AG04450 (cell line): ENCODE measurements at regions of chr19 and their contacts with region 1.

Region 1: GRCh38 chr19:50556282-50557008 is 11.8 kb downstream of the LRRC4B start:
- DNase-seq: peak; percentile 16
- H3K4me3 ChIP-seq: peak overlapping the region; percentile 58
- H3K27ac ChIP-seq: no peak overlapping the region
- H3K27me3 ChIP-seq: peaks cover 15% of the 10 kb centered on the region
- CTCF ChIP-seq: peak; percentile 76

Region 2: GRCh38 chr19:50511068-50511822 is 45.2 kb before region 1 on chr19 and contains the start of gene JOSD2:
- CTCF ChIA-PET with region 1: interaction called, 12 read pairs
- POLR2A ChIA-PET with region 1: interaction called, 7 read pairs
- DNase-seq: peak; percentile 98
- H3K4me3 ChIP-seq: peak within 1 kb of the TSS; percentile 94
- H3K27ac ChIP-seq: peak within 1 kb of the TSS; percentile 80
- H3K27me3 ChIP-seq: no peaks in the 10 kb centered on the region
- CTCF ChIP-seq: no peak
- polyA plus RNA-seq, gene JOSD2: 19.6 and 30.7 TPM in 2 replicates

Region 3: DNA sequence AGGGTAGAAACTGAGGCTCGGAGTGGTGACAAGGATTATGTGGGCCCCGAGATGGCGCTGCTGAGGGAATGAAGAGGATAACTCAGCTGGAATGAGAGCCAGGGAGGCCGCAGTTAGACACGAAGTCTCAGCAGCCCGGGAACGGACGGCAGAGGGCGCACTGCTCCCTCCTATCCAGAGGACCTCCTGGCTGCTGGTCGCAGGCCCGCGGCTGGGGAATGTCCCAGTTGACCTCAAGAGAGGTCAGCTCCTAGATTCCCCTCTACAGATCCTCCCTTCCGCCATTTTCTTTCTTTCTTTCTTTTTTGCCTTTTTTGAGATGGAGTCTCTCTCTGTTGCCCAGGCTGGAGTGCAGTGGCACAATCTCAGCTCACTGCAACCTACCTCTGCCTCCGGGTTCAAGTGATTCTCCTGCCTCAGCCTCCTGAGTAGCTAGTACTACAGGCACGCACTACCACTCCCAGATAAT is 18.6 kb before region 1 on chr19:
- CTCF ChIA-PET with region 1: interaction called, 65 read pairs
- POLR2A ChIA-PET with region 1: no interaction called
- DNase-seq: peak; percentile 33
- H3K4me3 ChIP-seq: no peak overlapping the region
- H3K27ac ChIP-seq: no peak overlapping the region
- H3K27me3 ChIP-seq: no peaks in the 10 kb centered on the region
- CTCF ChIP-seq: peak; percentile 79

Region 4: GRCh38 chr19:50568321-50569075 is 12.1 kb after region 1 on chr19 and contains the start of gene LRRC4B:
- CTCF ChIA-PET with region 1: interaction called, 22 read pairs
- POLR2A ChIA-PET with region 1: no interaction called
- DNase-seq: no peak
- H3K4me3 ChIP-seq: no peak within 1 kb of the TSS
- H3K27ac ChIP-seq: no peak within 1 kb of the TSS
- H3K27me3 ChIP-seq: peaks cover 39% of the 10 kb centered on the region
- CTCF ChIP-seq: no peak
- polyA plus RNA-seq, gene LRRC4B: not detected in 2 replicates